ENCODE measurements at regions of chr5 and their contacts with region 1.

Region 1: DNA sequence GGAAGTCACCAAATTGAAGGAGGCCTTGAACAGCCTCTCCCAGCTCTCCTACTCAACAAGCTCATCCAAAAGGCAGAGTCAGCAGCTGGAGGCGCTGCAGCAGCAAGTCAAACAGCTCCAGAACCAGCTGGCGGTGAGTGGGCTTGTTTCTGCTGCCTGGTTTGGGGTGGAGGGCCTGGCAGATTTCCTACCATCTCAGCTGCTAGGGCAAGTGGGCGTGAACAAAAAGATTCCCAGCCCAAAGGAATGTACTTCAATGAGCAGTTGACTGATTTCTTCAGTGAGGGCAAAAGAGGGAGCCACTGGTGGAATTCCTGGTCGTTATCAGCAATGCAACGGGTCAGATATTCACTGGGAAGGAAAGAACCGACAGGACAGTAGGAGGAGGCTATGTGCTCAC is 12.6 kb upstream of the TTC23L start:
- DNase-seq: no peak
- H3K4me3 ChIP-seq: no peak overlapping the region
- H3K27ac ChIP-seq: no peak overlapping the region
- H3K4me1 ChIP-seq: peaks cover 30% of the 10 kb centered on the region
- CTCF ChIP-seq: no peak

Region 2: GRCh38 chr5:34813509-34813908 is 12.8 kb before region 1 on chr5:
- CTCF ChIA-PET with region 1: no interaction called
- POLR2A ChIA-PET with region 1: interaction called, 16 read pairs
- intact Hi-C with region 1: no loop called
- DNase-seq: no peak
- H3K4me3 ChIP-seq: no peak overlapping the region
- H3K27ac ChIP-seq: no peak overlapping the region
- H3K4me1 ChIP-seq: no peaks in the 10 kb centered on the region
- CTCF ChIP-seq: no peak

Region 3: DNA sequence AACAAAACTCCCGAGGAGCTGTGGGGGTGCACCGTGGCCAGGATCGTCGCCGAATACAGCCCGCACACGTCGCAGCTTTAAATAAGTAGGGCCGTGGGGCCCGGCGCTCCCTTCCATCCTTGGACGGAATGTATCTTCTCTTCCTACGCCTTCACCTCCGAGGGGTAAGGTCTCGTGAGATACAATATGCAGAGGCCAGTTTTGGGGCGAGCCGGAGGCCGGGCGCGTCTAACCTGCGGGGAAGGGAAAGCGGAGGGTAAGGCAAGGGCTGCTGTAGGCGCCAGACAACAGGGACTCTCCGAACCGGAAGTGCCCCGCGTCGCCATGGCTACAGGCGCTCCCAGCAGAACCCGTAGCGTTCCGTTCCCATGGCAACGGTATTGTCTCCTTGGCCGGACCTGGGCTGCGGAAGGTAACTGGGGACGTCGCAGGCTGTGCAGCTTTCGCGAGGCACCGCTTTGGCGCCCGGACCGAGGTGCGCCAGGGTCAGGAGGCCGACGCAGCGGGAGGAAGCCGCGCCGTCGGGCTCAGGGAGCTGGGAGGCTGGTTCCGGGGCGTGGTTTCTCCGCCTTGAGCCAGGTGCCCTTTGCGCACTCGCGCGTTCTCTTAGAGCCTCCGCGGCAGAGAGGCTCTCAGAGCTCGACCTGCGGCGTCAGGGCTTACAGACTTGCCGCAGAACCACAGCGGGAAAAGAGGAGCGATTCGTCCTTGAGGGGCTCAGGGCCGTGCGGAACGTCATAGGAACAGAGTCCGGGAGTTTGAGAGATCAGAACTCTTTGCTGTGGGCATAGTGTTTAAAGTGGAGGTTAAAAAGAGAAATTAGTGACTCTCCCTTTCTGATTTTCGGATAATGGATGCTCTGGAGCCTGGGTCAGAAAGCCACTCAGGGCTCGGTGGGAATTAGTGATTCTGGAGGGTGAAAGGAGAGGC is 12.7 kb after region 1 on chr5 and contains the start of gene TTC23L:
- CTCF ChIA-PET with region 1: no interaction called
- POLR2A ChIA-PET with region 1: interaction called, 16 read pairs
- intact Hi-C with region 1: no loop called
- DNase-seq: peak; percentile 68
- H3K4me3 ChIP-seq: peak within 1 kb of the TSS; percentile 61
- H3K27ac ChIP-seq: no peak within 1 kb of the TSS
- H3K4me1 ChIP-seq: no peaks in the 10 kb centered on the region
- CTCF ChIP-seq: no peak
- total RNA-seq, gene TTC23L: 0.06 TPM in 1 of 2 replicates, not detected in the other

Region 4: DNA sequence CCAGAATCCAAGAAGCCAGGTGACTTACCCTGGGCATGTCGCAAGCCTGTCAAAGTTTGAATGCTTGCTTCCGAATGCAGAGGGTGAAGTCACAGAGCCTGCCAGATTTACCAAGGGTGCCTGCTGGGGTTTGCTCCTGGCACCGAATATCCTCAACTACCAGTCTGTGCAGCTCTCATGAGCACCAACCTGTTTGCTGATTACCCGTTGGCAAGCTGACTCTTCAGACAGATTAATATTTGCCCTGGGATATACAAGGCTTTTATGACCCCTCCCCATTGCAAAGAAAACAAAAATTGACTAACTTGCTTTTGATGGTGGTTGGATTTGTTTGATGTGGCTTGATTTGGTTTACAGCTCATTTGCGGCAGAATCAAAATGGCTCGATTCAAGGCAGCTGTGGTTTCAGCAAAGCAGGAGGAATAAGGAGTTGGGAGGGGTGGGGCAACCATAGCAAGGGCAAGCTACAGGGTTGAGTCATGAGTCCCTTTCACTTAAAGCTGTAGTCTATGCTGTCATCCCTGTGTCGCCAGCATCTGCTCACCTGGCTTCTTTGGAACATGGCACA is 303.7 kb after region 1 on chr5:
- CTCF ChIA-PET with region 1: no interaction called
- POLR2A ChIA-PET with region 1: no interaction called
- intact Hi-C with region 1: no loop called
- DNase-seq: no peak
- H3K4me3 ChIP-seq: no peak overlapping the region
- H3K27ac ChIP-seq: no peak overlapping the region
- H3K4me1 ChIP-seq: no peaks in the 10 kb centered on the region
- CTCF ChIP-seq: no peak

Region 5: GRCh38 chr5:35478856-35479682 is 652.7 kb after region 1 on chr5:
- CTCF ChIA-PET with region 1: no interaction called
- POLR2A ChIA-PET with region 1: no interaction called
- intact Hi-C with region 1: no loop called
- DNase-seq: peak; percentile 41
- H3K4me3 ChIP-seq: peak overlapping the region; percentile 35
- H3K27ac ChIP-seq: no peak overlapping the region
- H3K4me1 ChIP-seq: no peaks in the 10 kb centered on the region
- CTCF ChIP-seq: no peak